Transverse colon (tissue), 4 donors: ENCODE measurements at regions of chr13 and their contacts with region 1.

Region 1: DNA sequence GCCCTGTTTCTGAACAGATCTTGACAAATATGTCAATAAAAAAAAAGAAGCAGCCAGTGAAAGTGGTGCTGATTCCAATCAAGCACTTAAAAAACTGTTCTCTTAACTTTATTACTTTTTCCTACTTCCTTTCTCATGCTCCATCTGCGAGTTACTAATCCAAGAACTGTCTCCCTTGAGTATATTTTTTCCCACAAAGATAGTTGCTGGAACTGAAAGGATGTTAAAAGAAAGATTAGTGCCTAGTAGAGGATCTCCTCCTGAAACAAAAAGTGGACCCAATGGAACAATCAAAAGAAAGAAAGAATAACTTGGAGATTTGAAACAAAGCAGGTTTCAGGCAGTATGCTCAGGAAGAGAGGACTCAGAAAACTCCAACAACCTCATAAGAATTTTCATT is 1034.8 kb downstream of the PCDH17 start:
- DNase-seq: no peak
- H3K4me3 ChIP-seq: no peak overlapping the region
- H3K27ac ChIP-seq: no peak overlapping the region
- H3K4me1 ChIP-seq: no peaks in the 10 kb centered on the region
- H3K27me3 ChIP-seq: no peaks in the 10 kb centered on the region
- CTCF ChIP-seq: no peak
- EP300 ChIP-seq: no peak
- POLR2A ChIP-seq: no peak

Region 2: GRCh38 chr13:58190577-58190976 is 475.8 kb before region 1 on chr13:
- in situ Hi-C with region 1: no loop called
- intact Hi-C with region 1: loop called (anchors 5 kb)
- DNase-seq: no peak
- H3K4me3 ChIP-seq: no peak overlapping the region
- H3K27ac ChIP-seq: no peak overlapping the region
- H3K4me1 ChIP-seq: no peaks in the 10 kb centered on the region
- H3K27me3 ChIP-seq: no peaks in the 10 kb centered on the region
- CTCF ChIP-seq: no peak
- EP300 ChIP-seq: no peak
- POLR2A ChIP-seq: no peak